Dendritic cell treated with granulocyte-macrophage colony-stimulating factor and Interleukin-4, amounts not matched to agents 40 ng/mL and 50 ng/mL, for 4 days (primary cell): ENCODE measurements at regions of chr2 and their contacts with region 1.

Region 1: DNA sequence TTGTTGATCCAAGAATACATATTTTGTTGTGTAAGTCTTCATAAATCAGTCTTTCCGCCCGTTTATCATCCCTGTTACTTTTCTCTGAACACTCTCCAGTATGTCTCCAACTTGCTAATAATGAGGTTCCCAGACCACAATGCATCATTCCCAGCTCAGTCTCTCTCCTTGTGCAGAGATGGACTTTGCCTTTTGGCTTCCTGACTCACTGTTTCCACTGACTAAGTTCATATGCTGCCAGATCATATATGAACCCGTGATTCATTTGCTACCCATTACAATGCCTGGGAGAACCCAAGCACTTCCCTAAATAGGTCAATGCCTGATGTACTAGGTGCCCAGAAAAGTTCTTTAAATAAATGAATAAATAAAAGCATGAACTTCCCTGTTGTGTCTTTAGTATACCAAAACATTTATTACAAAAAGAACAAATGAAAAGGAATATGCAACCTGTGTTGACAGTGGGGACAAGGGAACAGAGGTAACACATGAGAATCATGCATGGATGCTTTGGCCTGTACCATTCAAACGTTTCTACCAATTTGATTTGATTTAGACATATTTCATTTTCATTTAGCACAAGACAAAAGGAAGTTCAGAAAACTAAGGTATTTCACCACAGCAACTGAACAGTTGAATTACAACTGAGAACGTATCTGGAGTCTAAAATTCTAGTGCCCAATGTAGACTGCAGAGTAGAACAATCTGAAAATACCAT is 215.4 kb upstream of the HNRNPA3 start:
- H3K4me3 Mint-ChIP-seq: no peak overlapping the region
- H3K27ac Mint-ChIP-seq: peak overlapping the region; percentile 66
- H3K4me1 Mint-ChIP-seq: peaks cover 42% of the 10 kb centered on the region
- H3K27me3 Mint-ChIP-seq: no peaks in the 10 kb centered on the region

Region 2: DNA sequence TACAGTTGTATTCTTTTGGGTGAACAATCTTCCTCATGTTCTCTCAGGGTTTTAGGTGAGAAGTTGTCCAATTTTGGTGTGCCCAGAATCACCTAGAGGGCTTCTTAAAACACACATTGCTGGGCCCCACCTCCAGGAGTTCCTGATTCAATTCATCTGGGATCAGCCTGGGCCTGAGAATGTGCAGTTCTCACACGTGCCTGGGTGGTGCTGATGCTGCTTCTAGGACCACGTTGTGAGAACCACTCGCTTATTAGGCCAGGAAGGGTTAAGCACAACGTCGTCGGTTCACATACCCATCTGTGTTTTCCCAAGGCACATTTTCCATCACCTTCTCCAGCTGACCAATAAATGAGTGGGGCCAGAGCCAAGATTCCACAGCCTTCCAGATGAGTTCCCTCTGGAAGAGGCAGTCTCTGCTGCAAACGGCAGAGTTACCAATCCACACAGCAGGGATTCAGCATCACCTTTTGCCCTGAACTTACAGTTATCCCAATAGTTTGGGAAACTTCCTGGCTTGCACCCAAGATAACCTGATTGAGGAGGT is 62.3 kb before region 1 on chr2:
- intact Hi-C with region 1: loop called (anchors 5 kb)
- H3K4me3 Mint-ChIP-seq: no peak overlapping the region
- H3K27ac Mint-ChIP-seq: no peak overlapping the region
- H3K4me1 Mint-ChIP-seq: peaks cover 35% of the 10 kb centered on the region
- H3K27me3 Mint-ChIP-seq: peaks cover 2% of the 10 kb centered on the region

Region 3: GRCh38 chr2:177021706-177022343 is 24.6 kb after region 1 on chr2:
- intact Hi-C with region 1: no loop called
- H3K4me3 Mint-ChIP-seq: no peak overlapping the region
- H3K27ac Mint-ChIP-seq: no peak overlapping the region
- H3K4me1 Mint-ChIP-seq: no peaks in the 10 kb centered on the region
- H3K27me3 Mint-ChIP-seq: no peaks in the 10 kb centered on the region